ENCODE measurements at regions of chr7 and their contacts with region 1.

Region 1: GRCh38 chr7:100586266-100587025 is at the start of gene FBXO24:
- DNase-seq: peak; percentile 100
- ATAC-seq: peak; percentile 88 to 94 (median 90)
- H3K4me3 ChIP-seq: peak within 1 kb of the TSS; percentile 96 to 100 (median 99)
- H3K27ac ChIP-seq: peak within 1 kb of the TSS; percentile 98 to 99 (median 99)
- H3K4me1 ChIP-seq: peaks cover 0 to 21% (median 7%) of the 10 kb centered on the region in 4 donors
- H3K27me3 ChIP-seq: no peaks in the 10 kb centered on the region
- CTCF ChIP-seq: no peak
- POLR2A ChIP-seq: no peak
- total RNA-seq, gene FBXO24: 0.25 to 1.0 (median 0.45) TPM

Region 2: GRCh38 chr7:100088621-100089457 is 497.6 kb before region 1 on chr7 and contains the start of gene COPS6:
- intact Hi-C with region 1: no loop called
- DNase-seq: peak; percentile 87 to 89 (median 88)
- ATAC-seq: peak; percentile 81 to 91 (median 87)
- H3K4me3 ChIP-seq: peak within 1 kb of the TSS; percentile 74 to 98 (median 97)
- H3K27ac ChIP-seq: peak within 1 kb of the TSS; percentile 60 to 81 (median 72)
- H3K4me1 ChIP-seq: peaks cover 0 to 8% (median 3%) of the 10 kb centered on the region in 4 donors
- H3K27me3 ChIP-seq: no peaks in the 10 kb centered on the region
- CTCF ChIP-seq: no peak
- POLR2A ChIP-seq: peak; percentile 82
- total RNA-seq, gene COPS6: 28.3 to 49.7 (median 42.7) TPM

Region 3: DNA sequence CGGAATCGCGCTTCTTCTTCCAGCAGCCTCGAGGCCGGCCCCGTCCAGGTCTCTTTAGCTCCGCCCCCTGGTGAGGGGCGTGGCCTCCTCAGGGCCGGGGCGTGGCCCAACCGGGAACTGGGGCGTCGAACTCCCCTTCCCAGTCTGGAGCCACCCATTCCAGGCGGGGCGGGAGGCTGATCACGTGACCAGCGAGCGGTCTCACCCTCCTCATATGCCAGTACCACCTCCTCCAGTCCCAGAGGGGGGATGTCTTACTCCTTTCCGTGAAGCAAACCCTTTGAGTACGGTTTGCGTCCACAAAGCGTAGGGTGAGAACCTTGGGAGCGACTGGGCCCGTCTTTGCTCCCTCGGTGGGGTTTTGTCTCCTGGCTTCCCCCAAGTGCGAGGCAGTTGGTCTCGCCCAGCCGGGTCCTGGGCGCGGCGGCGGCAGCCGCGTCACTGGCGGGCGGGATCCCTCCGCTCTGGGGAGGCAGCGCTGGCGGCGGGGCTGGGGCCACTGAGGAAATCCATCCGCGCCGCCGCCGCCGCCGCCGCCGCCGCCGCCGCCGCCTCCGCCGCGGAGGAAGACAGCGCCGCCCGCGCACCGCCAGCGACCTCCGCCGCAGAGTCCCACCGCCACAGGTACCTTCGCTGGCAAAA is 87.0 kb after region 1 on chr7 and contains the start of gene GNB2:
- intact Hi-C with region 1: loop called in 1 of 2 experiments (anchors 10 kb)
- DNase-seq: peak; percentile 99 to 100 (median 100)
- ATAC-seq: peak; percentile 82 to 90 (median 86)
- H3K4me3 ChIP-seq: peak within 1 kb of the TSS; percentile 68 to 91 (median 90)
- H3K27ac ChIP-seq: peak within 1 kb of the TSS; percentile 91 to 99 (median 98)
- H3K4me1 ChIP-seq: peaks cover 0 to 3% (median 0%) of the 10 kb centered on the region in 4 donors
- H3K27me3 ChIP-seq: no peaks in the 10 kb centered on the region
- CTCF ChIP-seq: peak in 1 of 4 donors; percentile 11
- POLR2A ChIP-seq: peak; percentile 88
- total RNA-seq, gene GNB2: 75.6 to 133 (median 106) TPM